ENCODE measurements at regions of chr4 and their contacts with region 1.

Region 1: DNA sequence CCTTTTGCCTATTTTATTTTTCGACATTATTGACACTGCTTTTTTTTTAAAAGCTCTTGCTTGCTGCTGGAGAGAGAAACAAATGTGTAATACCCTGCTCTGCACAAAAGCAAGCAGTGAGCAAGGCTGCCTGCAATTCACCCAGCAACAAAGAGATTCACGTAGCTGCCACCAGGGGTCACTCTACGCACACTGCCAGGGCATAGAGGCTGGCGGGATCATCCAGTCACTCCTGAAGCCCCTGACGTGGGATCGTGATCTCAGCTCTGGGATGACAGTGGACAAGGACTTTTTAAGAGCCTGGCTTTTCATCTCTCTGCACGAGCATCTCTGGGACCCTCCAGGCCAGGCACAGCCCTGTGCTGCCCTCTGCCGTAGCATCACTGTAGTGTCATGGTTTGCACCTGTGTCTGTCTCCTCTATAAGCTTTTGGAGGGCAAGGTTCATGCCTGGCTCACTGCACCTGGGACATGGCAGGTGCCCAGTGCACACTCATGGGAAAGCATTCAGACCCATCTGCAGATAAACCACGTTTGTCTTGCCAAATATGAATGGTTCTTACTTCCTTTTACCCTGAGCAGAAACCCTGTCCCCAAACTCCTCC is 19.8 kb downstream of the C4orf50 start:
- H3K4me3 ChIP-seq: no peak overlapping the region
- H3K27ac ChIP-seq: no peak overlapping the region
- H3K4me1 ChIP-seq: no peaks in the 10 kb centered on the region
- CTCF ChIP-seq: peak; percentile 74

Region 2: GRCh38 chr4:5982156-5982973 is 16.1 kb before region 1 on chr4:
- CTCF ChIA-PET with region 1: interaction called, 15 read pairs
- POLR2A ChIA-PET with region 1: no interaction called
- H3K4me3 ChIP-seq: no peak overlapping the region
- H3K27ac ChIP-seq: no peak overlapping the region
- H3K4me1 ChIP-seq: no peaks in the 10 kb centered on the region
- CTCF ChIP-seq: no peak

Region 3: GRCh38 chr4:6011686-6012085 is 13.3 kb after region 1 on chr4:
- CTCF ChIA-PET with region 1: interaction called, 31 read pairs
- POLR2A ChIA-PET with region 1: no interaction called
- H3K4me3 ChIP-seq: no peak overlapping the region
- H3K27ac ChIP-seq: no peak overlapping the region
- H3K4me1 ChIP-seq: no peaks in the 10 kb centered on the region
- CTCF ChIP-seq: no peak

Region 4: DNA sequence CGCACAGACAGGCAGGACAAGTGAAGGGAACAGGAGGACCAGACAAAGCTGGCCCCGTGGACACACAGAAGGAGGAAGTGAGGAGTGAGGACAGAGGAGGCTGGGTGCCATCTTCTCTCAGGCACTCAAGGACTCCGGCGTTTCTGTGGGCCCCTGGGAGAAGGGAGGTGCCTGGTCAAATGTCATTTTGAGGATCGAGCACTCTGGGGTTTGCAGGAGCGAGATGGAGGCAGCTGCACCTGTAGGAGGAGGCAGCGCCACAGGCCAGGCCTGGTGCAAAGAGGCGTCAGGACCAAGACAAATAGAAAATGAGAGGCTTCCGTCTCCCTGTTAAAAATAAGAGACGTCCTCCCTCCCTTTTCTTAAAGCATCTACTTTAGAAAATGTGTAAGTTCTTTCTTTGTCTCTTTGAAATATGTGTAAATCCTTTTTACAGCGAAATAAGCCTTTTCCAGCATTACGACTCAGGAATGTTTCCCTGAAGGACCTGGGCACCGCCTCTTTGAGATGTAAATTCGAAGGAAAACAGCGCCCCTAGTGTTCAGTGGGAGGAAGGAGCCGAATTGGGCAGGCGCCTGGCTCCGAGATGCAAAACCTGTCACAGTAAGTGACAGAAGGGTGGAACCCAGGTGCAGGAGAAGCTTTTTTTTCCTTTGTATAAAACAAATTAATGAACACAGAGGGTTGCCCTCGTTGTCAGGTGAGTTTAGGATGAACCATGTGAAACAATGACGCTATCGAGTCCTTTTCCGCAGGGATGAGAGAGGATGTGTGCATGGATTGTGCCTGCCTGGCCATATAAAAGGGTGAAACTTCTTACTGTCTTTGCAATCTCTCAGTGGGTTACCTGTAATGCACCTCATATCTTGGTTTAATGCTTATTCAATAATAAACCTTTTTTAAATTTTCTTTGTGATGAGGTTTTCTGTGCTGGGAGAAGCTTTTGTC is 21.2 kb after region 1 on chr4:
- CTCF ChIA-PET with region 1: interaction called, 42 read pairs
- POLR2A ChIA-PET with region 1: no interaction called
- H3K4me3 ChIP-seq: no peak overlapping the region
- H3K27ac ChIP-seq: no peak overlapping the region
- H3K4me1 ChIP-seq: no peaks in the 10 kb centered on the region
- CTCF ChIP-seq: no peak

Region 5: DNA sequence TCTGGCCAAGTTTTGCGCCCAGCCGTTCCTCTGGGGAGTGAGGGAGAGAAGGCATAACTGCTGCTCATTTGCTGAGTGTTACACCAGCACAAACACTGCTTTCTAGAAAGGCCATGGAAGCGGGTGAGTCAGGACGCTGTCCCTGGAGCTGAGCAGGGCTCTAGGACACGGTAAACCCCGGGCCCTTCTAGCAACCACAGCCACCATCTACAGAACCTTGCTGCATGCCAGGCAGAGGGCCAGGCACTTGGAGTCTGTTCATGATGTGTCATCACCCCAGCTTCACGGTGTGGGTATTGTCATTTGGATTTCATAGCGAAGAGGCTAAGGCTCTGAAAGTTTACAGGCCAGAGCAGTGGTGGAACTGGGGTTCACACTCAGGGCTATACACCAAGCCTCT is 51.5 kb after region 1 on chr4:
- CTCF ChIA-PET with region 1: no interaction called
- POLR2A ChIA-PET with region 1: no interaction called
- H3K4me3 ChIP-seq: no peak overlapping the region
- H3K27ac ChIP-seq: no peak overlapping the region
- H3K4me1 ChIP-seq: no peaks in the 10 kb centered on the region
- CTCF ChIP-seq: no peak

Region 6: GRCh38 chr4:6087673-6088341 is 89.4 kb after region 1 on chr4:
- CTCF ChIA-PET with region 1: interaction called, 60 read pairs
- POLR2A ChIA-PET with region 1: no interaction called
- H3K4me3 ChIP-seq: no peak overlapping the region
- H3K27ac ChIP-seq: no peak overlapping the region
- H3K4me1 ChIP-seq: no peaks in the 10 kb centered on the region
- CTCF ChIP-seq: no peak

Region 7: GRCh38 chr4:6160536-6160935 is 162.1 kb after region 1 on chr4:
- CTCF ChIA-PET with region 1: no interaction called
- POLR2A ChIA-PET with region 1: no interaction called
- H3K4me3 ChIP-seq: no peak overlapping the region
- H3K27ac ChIP-seq: no peak overlapping the region
- H3K4me1 ChIP-seq: no peaks in the 10 kb centered on the region
- CTCF ChIP-seq: no peak

Region 8: GRCh38 chr4:6250235-6250983 is 252.0 kb after region 1 on chr4:
- CTCF ChIA-PET with region 1: interaction called, 14 read pairs
- POLR2A ChIA-PET with region 1: no interaction called
- H3K4me3 ChIP-seq: no peak overlapping the region
- H3K27ac ChIP-seq: no peak overlapping the region
- H3K4me1 ChIP-seq: no peaks in the 10 kb centered on the region
- CTCF ChIP-seq: peak; percentile 24; the same call in 1 of the 2 replicates

Region 9: DNA sequence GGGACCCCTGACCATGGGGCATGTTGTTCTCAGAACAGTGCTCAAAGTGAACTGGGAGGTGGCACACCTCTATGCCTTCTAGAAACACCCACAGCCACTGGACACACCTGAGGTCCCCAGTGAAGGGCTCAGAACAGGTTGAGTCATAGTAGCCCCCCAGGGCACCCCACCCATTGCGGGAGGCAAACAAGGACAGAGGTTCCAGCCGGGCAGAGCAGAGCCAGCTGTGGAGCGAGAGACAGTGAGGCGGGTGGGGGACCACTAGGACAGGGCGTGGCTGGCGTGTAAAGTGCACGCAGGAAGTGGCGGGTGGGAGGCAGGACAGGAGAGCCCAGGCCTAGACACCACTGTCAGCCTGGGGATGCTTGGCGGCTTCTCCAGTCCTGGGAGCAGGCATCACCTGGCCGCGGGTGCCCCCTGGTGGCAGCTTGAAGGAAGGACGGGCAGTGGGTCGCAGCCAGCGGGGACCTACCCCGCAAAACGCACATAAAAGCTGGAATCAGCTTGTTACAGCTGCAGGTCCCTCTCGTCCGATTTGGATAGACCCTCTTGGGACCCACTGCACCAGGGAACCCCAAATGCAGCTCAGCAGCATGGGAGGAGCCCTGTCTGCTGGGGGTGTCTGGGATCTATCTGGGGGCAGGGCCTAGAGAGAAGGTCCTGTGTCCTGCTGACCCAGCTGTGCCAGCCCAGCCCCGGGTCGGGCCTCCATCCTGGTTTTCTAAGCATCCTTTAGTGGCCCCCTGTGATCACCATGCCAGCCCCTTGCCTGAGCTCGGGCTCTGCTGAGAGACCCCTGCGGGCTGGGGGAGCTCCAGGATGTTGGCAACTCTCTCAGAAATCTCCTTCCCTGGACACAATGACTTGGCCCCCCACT is 328.8 kb after region 1 on chr4:
- CTCF ChIA-PET with region 1: interaction called, 10 read pairs
- POLR2A ChIA-PET with region 1: no interaction called
- H3K4me3 ChIP-seq: no peak overlapping the region
- H3K27ac ChIP-seq: no peak overlapping the region
- H3K4me1 ChIP-seq: no peaks in the 10 kb centered on the region
- CTCF ChIP-seq: peak; percentile 87